Sciatic nerve (tissue), 2 donors: ENCODE measurements at regions of chr7 and their contacts with region 1.

Region 1: DNA sequence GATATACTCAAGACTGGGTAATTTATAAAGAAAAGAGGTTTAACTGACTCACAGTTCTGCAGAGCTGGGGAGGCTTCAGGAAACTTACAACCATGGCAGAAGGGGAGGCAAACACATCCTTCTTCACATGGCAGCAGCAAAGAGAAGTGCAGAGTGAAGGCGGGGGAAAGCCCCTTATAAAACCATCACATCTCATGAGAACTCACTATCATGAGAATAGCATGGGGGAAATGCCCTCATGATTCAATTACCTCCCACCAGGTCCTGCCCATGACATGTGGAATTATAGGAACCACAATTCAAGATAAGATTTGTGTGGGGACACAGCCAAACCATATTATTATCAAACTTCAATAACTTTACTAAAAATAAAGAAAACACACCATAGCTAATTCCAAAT is 30.4 kb upstream of the JAZF1 start:
- DNase-seq: no peak
- ATAC-seq: no peak

Region 2: DNA sequence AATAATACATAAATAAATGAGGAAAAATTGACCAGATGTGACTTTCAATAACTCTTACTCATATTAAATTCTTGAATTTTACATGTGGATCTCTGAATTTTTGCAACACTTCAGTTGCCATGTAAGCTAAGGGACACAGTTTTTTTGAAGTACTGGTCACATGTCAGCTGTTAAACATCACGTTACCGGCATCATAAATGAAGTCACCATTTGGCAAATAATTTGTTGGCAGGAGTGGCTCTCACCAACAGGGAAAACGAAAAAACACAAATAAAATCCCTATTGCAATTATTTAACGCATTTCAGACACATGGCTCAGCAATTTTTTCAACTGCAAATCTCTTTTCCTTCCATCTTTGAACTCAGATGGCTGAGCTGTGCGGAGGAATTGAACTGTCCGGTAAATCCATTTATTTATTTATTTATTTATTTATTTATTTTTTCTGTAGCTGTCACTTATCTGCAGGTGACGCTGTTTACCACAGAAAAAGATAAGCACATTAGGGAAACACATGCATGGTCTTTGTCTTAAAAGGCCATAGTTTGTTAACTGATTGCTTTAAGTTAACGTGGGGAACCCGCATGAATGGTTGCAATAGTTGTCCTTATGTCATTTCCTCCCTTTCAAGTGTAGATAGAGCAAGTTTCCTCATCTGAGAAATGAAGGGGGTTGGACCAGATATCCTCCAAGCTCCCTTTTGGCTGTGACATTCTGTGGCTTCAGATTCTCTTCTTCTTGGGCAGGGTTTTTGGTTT is 34.3 kb after region 1 on chr7:
- intact Hi-C with region 1: no loop called
- DNase-seq: no peak
- ATAC-seq: no peak

Region 3: DNA sequence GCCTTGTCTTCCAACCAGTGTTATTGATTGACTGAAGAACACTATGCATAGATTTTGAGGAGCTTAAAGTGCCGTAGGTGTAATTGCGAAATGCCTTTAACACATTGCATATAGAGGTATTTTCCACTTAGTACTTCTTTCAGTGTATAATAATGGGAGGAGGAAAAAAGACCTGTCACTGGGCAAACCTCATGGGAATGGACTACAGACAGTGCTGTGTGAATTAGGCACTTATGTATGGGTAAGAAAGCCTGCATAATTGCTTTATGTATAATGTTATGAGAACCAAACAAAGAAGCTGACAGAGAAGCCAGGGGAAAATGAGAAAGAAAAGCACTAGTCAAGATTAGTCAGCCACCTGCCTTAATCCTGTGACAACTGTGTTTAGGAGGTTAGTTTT is 1791.0 kb after region 1 on chr7:
- intact Hi-C with region 1: loop called (anchors 10 kb)
- DNase-seq: no peak
- ATAC-seq: no peak